ENCODE measurements at regions of chr1 and their contacts with region 1.

Region 1: GRCh38 chr1:226121587-226122400 is 59.3 kb downstream of the H3-3A start:
- DNase-seq: peak; percentile 88 to 89
- H3K4me3 ChIP-seq: peak overlapping the region; percentile 80
- H3K4me3 Mint-ChIP-seq: peak overlapping the region; percentile 75
- H3K27ac Mint-ChIP-seq: peak overlapping the region; percentile 78
- H3K4me1 ChIP-seq: peaks cover 11% of the 10 kb centered on the region
- H3K4me1 Mint-ChIP-seq: peaks cover 17% of the 10 kb centered on the region
- H3K27me3 ChIP-seq: no peaks in the 10 kb centered on the region
- H3K27me3 Mint-ChIP-seq: no peaks in the 10 kb centered on the region
- CTCF ChIP-seq: peak; percentile 38 to 73

Region 2: GRCh38 chr1:225999227-225999911 is 122.4 kb before region 1 on chr1 and contains the start of gene SDE2:
- CTCF ChIA-PET with region 1: no interaction called
- POLR2A ChIA-PET with region 1: no interaction called
- intact Hi-C with region 1: loop called (anchors 5 kb)
- DNase-seq: peak; percentile 99
- H3K4me3 ChIP-seq: peak within 1 kb of the TSS; percentile 58
- H3K4me3 Mint-ChIP-seq: peak within 1 kb of the TSS; percentile 96
- H3K27ac Mint-ChIP-seq: peak within 1 kb of the TSS; percentile 99
- H3K4me1 ChIP-seq: peaks cover 17% of the 10 kb centered on the region
- H3K4me1 Mint-ChIP-seq: peaks cover 13% of the 10 kb centered on the region
- H3K27me3 ChIP-seq: no peaks in the 10 kb centered on the region
- H3K27me3 Mint-ChIP-seq: no peaks in the 10 kb centered on the region
- CTCF ChIP-seq: no peak
- total RNA-seq, gene SDE2: 16.6 and 18.6 TPM in 2 replicates

Region 3: GRCh38 chr1:226149806-226150205 is 28.0 kb after region 1 on chr1:
- CTCF ChIA-PET with region 1: interaction called, 19 read pairs
- POLR2A ChIA-PET with region 1: interaction called, 3 read pairs
- intact Hi-C with region 1: loop called (anchors 1 kb)
- DNase-seq: peak; percentile 56 to 69
- H3K4me3 ChIP-seq: no peak overlapping the region
- H3K4me3 Mint-ChIP-seq: no peak overlapping the region
- H3K27ac Mint-ChIP-seq: no peak overlapping the region
- H3K4me1 ChIP-seq: no peaks in the 10 kb centered on the region
- H3K4me1 Mint-ChIP-seq: peaks cover 7% of the 10 kb centered on the region
- H3K27me3 ChIP-seq: no peaks in the 10 kb centered on the region
- H3K27me3 Mint-ChIP-seq: no peaks in the 10 kb centered on the region
- CTCF ChIP-seq: peak in 1 of 2 experiments; percentile 25

Region 4: DNA sequence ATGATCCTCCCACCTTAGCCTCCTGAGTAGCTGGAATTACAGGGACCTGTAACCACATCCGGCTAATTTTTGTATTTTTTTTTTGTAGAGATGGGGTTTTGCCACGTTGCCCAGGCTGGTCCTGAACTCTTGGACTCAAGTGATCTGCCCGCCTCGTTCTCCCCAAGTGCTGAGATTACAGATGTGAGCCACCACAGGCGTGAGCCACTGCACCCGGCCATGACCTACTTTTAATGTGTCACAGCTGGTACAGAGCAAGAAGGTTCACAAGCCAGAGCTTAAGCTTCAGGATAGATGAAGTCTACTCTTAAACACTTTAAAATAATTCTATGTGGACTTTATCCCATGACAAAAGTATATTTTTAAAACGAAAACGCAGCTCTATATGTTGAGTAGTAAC is 41.1 kb after region 1 on chr1:
- CTCF ChIA-PET with region 1: no interaction called
- POLR2A ChIA-PET with region 1: no interaction called
- intact Hi-C with region 1: no loop called
- DNase-seq: no peak
- H3K4me3 ChIP-seq: no peak overlapping the region
- H3K4me3 Mint-ChIP-seq: no peak overlapping the region
- H3K27ac Mint-ChIP-seq: no peak overlapping the region
- H3K4me1 ChIP-seq: no peaks in the 10 kb centered on the region
- H3K4me1 Mint-ChIP-seq: no peaks in the 10 kb centered on the region
- H3K27me3 ChIP-seq: no peaks in the 10 kb centered on the region
- H3K27me3 Mint-ChIP-seq: no peaks in the 10 kb centered on the region
- CTCF ChIP-seq: no peak

Region 5: DNA sequence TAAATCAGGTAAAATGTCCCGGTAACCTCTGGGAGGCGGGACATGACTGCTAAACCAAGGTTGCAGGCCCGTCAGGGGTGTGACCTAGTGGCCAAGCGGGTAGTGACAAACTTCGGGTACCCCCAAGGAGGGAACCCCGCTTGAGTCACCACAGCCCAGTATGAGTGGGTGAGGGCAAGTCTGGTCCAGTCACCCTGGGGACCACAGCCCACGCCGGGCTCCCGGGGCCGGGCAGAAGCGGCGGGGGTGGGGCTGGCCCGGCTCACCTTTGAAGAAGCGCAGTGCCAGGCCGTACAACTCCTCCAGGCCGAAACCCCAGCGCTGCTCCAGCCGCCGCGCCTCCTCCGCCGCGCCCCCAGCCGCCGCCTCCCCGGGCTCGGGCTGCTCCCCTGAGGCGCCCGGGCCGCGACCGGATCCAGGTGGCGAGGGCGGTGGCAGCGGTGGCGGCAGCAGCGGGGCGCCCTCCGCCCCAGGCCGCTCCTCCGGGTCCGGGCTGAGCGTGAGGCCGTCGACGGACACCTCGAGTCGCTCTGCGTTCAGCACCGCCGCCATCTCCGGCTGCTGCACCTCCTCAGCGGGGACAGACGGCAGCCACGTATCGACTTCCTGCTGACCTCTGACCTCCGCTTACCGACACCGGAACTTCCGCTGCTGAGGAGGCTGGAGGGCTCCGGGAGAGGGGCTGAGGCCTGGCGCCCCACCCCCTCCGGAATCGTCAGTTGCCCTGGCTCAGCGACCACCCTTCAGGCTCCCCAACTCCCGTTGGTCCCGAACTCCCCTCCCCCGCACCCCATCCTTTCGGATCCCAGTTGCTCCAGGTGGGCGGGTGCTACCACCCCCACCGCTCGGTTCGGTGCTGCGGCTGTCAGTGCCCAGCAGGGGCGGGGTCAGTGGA is 64.6 kb after region 1 on chr1 and contains the start of gene ACBD3:
- CTCF ChIA-PET with region 1: interaction called, 4 read pairs
- POLR2A ChIA-PET with region 1: no interaction called
- intact Hi-C with region 1: loop called (anchors 2 kb)
- DNase-seq: peak; percentile 89 to 91
- H3K4me3 ChIP-seq: peak within 1 kb of the TSS; percentile 96
- H3K4me3 Mint-ChIP-seq: peak within 1 kb of the TSS; percentile 92
- H3K27ac Mint-ChIP-seq: peak within 1 kb of the TSS; percentile 85
- H3K4me1 ChIP-seq: peaks cover 16% of the 10 kb centered on the region
- H3K4me1 Mint-ChIP-seq: peaks cover 4% of the 10 kb centered on the region
- H3K27me3 ChIP-seq: no peaks in the 10 kb centered on the region
- H3K27me3 Mint-ChIP-seq: no peaks in the 10 kb centered on the region
- CTCF ChIP-seq: no peak
- total RNA-seq, gene ACBD3: 38.5 and 41.7 TPM in 2 replicates

Region 6: GRCh38 chr1:226201029-226201593 is 79.3 kb after region 1 on chr1:
- CTCF ChIA-PET with region 1: interaction called, 42 read pairs
- POLR2A ChIA-PET with region 1: interaction called, 3 read pairs
- intact Hi-C with region 1: loop called (anchors 1 kb)
- DNase-seq: peak in 1 of 2 experiments; percentile 22
- H3K4me3 ChIP-seq: no peak overlapping the region
- H3K4me3 Mint-ChIP-seq: no peak overlapping the region
- H3K27ac Mint-ChIP-seq: no peak overlapping the region
- H3K4me1 ChIP-seq: no peaks in the 10 kb centered on the region
- H3K4me1 Mint-ChIP-seq: no peaks in the 10 kb centered on the region
- H3K27me3 ChIP-seq: no peaks in the 10 kb centered on the region
- H3K27me3 Mint-ChIP-seq: no peaks in the 10 kb centered on the region
- CTCF ChIP-seq: peak in 1 of 2 experiments; percentile 48

Region 7: DNA sequence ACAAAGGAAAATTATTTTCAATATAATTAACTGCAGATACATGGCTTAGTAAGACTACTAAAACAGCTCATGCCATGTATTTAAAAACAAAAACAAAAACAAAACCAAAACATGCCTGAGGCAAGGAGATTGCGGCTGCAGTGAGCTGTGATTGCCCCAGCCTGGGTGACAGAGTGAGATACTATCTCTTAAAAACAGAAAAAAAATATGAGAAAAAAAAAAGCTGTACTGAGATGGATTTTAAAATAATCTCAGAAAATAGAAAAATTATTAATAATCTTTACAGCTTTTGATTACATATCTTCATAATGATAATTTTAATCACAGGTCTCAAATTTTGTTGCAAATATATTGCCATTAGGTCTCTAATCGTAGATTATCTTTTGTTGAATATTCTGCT is 211.2 kb after region 1 on chr1:
- CTCF ChIA-PET with region 1: interaction called, 10 read pairs
- POLR2A ChIA-PET with region 1: no interaction called
- intact Hi-C with region 1: loop called (anchors 1 kb)
- DNase-seq: no peak
- H3K4me3 ChIP-seq: no peak overlapping the region
- H3K4me3 Mint-ChIP-seq: peak overlapping the region; percentile 70
- H3K27ac Mint-ChIP-seq: no peak overlapping the region
- H3K4me1 ChIP-seq: no peaks in the 10 kb centered on the region
- H3K4me1 Mint-ChIP-seq: no peaks in the 10 kb centered on the region
- H3K27me3 ChIP-seq: no peaks in the 10 kb centered on the region
- H3K27me3 Mint-ChIP-seq: no peaks in the 10 kb centered on the region
- CTCF ChIP-seq: no peak

Region 8: DNA sequence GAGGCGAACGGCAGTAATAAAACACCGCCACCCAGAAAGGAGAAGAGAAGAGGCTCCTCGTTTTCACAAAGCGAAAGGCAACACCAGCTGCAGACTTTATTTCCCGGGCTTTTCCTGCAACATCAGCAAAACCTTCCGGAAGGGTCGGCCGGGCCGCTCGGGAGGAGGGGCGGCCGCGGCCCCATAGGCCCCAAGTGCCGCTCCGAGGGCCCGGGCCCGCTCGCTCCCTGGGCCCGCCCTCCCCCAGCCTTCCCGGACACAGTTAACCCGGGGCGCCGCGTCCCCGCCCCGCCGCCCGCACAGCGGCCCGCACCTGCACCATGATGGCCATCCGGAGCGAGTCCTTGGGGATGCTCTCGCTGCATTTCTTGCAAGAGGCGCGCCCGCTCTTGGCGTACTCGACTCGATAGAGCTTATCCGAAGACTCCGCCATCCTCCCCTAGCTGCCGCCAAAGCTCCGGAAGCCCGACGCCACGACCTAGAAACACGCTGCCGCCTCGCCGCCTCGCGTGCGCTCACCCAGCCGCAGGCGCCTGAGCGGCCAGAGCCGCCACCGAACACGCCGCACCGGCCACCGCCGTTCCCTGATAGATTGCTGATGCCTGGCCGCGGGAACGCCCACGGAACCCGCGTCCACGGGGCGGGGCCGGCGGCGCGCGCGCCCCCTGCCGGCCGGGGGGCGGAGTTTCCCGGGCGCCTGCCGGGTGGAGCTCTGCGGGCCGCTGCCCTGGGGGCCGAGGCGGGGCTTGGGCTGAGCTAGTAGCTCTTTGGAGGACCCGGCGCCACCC is 285.9 kb after region 1 on chr1 and contains the start of gene PARP1:
- CTCF ChIA-PET with region 1: no interaction called
- POLR2A ChIA-PET with region 1: no interaction called
- intact Hi-C with region 1: loop called (anchors 5 kb)
- DNase-seq: peak; percentile 89 to 92
- H3K4me3 ChIP-seq: peak within 1 kb of the TSS; percentile 86
- H3K4me3 Mint-ChIP-seq: peak within 1 kb of the TSS; percentile 86
- H3K27ac Mint-ChIP-seq: peak within 1 kb of the TSS; percentile 74
- H3K4me1 ChIP-seq: peaks cover 21% of the 10 kb centered on the region
- H3K4me1 Mint-ChIP-seq: peaks cover 21% of the 10 kb centered on the region
- H3K27me3 ChIP-seq: no peaks in the 10 kb centered on the region
- H3K27me3 Mint-ChIP-seq: no peaks in the 10 kb centered on the region
- CTCF ChIP-seq: peak; percentile 33 to 84
- total RNA-seq, gene PARP1: 127 and 136 TPM in 2 replicates

Region 9: GRCh38 chr1:226589008-226589733 is 467.4 kb after region 1 on chr1:
- CTCF ChIA-PET with region 1: no interaction called
- POLR2A ChIA-PET with region 1: no interaction called
- intact Hi-C with region 1: no loop called
- DNase-seq: no peak
- H3K4me3 ChIP-seq: no peak overlapping the region
- H3K4me3 Mint-ChIP-seq: no peak overlapping the region
- H3K27ac Mint-ChIP-seq: no peak overlapping the region
- H3K4me1 ChIP-seq: no peaks in the 10 kb centered on the region
- H3K4me1 Mint-ChIP-seq: no peaks in the 10 kb centered on the region
- H3K27me3 ChIP-seq: no peaks in the 10 kb centered on the region
- H3K27me3 Mint-ChIP-seq: no peaks in the 10 kb centered on the region
- CTCF ChIP-seq: no peak

Measured in Caco-2 (cell line).